ENCODE measurements at regions of chr4 and their contacts with region 1.

Region 1: GRCh38 chr4:87353592-87353991 is 30.9 kb upstream of the HSD17B13 start:
- DNase-seq: peak; percentile 71
- H3K4me3 Mint-ChIP-seq: no peak overlapping the region
- H3K27ac Mint-ChIP-seq: peak overlapping the region; percentile 79
- H3K4me1 Mint-ChIP-seq: peaks cover 18% of the 10 kb centered on the region
- H3K27me3 Mint-ChIP-seq: no peaks in the 10 kb centered on the region
- CTCF ChIP-seq: peak; percentile 77

Region 2: DNA sequence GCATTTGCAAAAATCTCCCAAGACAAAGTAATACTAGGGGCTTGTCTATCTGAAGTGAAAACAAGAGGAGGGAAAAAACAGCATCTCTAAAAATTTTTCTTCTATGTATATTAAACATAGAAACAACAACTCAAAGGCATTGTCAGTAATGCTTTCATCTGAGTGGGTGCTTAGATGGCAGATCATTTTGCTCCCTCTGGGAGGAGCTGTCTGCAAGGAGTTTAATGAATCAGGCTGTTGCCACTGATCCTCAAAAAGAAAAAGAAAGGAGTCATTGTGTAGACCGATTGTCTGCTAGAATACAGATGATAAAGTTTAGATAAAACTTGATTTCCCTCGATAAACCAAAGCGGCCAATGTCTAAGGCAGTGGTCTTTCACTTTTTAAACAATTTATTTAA is 83.4 kb before region 1 on chr4:
- CTCF ChIA-PET with region 1: interaction called, 3 read pairs
- POLR2A ChIA-PET with region 1: interaction called, 3 read pairs
- intact Hi-C with region 1: loop called (anchors 5 kb)
- DNase-seq: peak; percentile 63
- H3K4me3 Mint-ChIP-seq: no peak overlapping the region
- H3K27ac Mint-ChIP-seq: no peak overlapping the region
- H3K4me1 Mint-ChIP-seq: no peaks in the 10 kb centered on the region
- H3K27me3 Mint-ChIP-seq: no peaks in the 10 kb centered on the region
- CTCF ChIP-seq: peak; percentile 59

Region 3: GRCh38 chr4:87422104-87423052 is 68.8 kb after region 1 on chr4 and contains the start of gene NUDT9:
- CTCF ChIA-PET with region 1: no interaction called
- POLR2A ChIA-PET with region 1: interaction called, 7 read pairs
- intact Hi-C with region 1: loop called (anchors 5 kb)
- DNase-seq: peak; percentile 94
- H3K4me3 Mint-ChIP-seq: peak within 1 kb of the TSS; percentile 98
- H3K27ac Mint-ChIP-seq: peak within 1 kb of the TSS; percentile 100
- H3K4me1 Mint-ChIP-seq: peaks cover 9% of the 10 kb centered on the region
- H3K27me3 Mint-ChIP-seq: no peaks in the 10 kb centered on the region
- CTCF ChIP-seq: no peak
- total RNA-seq, gene NUDT9: 17.6 and 22.5 TPM in 2 replicates

Region 4: DNA sequence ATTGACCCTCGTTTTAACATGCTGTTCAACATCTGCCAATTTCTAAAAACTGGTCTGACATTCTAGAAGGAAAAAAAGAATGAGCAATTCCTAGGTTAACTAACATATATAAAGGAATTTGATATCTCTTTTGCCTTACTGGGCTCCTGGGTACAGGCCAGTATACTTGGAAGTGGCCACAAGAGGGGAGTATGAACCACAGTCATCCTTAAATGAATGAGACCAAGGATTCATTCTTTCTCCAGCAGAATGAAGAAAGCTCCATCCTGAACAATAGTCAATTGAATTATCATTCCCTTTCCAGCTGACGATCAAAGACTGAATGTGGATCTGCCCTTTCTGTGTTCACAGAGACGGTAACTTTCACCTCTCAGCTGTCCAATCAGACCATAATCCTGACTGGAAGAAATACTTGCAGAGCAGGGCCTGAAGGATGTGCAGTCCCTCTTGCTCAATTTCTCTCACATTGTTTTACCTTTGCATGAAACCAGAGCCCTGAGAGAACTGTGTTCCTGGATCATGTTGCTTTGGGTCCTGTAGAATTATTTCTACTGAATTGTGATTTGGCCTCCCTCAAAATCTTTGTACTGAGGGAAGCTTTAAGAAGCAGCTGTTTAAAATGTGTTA is 190.4 kb after region 1 on chr4:
- CTCF ChIA-PET with region 1: no interaction called
- POLR2A ChIA-PET with region 1: no interaction called
- intact Hi-C with region 1: loop called (anchors 5 kb)
- DNase-seq: peak; percentile 74
- H3K4me3 Mint-ChIP-seq: no peak overlapping the region
- H3K27ac Mint-ChIP-seq: no peak overlapping the region
- H3K4me1 Mint-ChIP-seq: no peaks in the 10 kb centered on the region
- H3K27me3 Mint-ChIP-seq: no peaks in the 10 kb centered on the region
- CTCF ChIP-seq: peak; percentile 53

Measured in MCF 10A (cell line).